Astrocyte of the cerebellum (primary cell): ENCODE measurements at regions of chr11 and their contacts with region 1.

Region 1: GRCh38 chr11:27857014-27857413 is 156.8 kb upstream of the BDNF start:
- DNase-seq: no peak
- H3K4me3 ChIP-seq: no peak overlapping the region
- CTCF ChIP-seq: no peak

Region 2: DNA sequence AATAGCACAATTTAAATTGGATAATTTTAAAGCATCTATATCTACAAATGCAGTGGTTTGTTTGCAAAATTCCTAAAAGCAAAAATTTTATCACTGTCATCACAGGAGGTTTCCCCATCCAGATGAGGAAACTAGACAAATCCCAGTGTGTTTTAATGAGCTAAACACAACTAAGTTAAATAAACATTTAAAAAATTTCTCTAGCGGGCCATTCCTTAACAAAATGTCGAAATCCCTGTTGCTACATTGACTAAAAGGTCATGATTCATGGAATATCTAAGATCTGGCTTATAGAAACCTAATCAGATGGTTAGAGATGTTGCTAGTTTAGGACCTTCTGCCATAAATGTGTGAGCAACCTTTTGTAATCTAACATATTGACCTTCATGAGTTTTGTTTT is 49.4 kb before region 1 on chr11:
- in situ Hi-C with region 1: loop called (anchors 5 kb)
- DNase-seq: no peak
- H3K4me3 ChIP-seq: no peak overlapping the region
- CTCF ChIP-seq: no peak